ENCODE measurements at regions of chr19 and their contacts with region 1.

Region 1: GRCh38 chr19:10543420-10544241 is at the start of gene ATG4D:
- DNase-seq: peak; percentile 97 to 99 (median 99)
- ATAC-seq: peak; percentile 87
- H3K4me3 ChIP-seq: peak within 1 kb of the TSS; percentile 97
- H3K27ac ChIP-seq: peak within 1 kb of the TSS; percentile 90
- H3K4me1 ChIP-seq: peaks cover 6 to 43% of the 10 kb centered on the region in 2 experiments; a peak in 4 of 5 replicates
- H3K27me3 ChIP-seq: no peaks in the 10 kb centered on the region
- CTCF ChIP-seq: no peak
- EP300 ChIP-seq: peak; percentile 81
- POLR2A ChIP-seq: peak; percentile 84
- RAD21 ChIP-seq: no peak
- polyA plus RNA-seq, gene ATG4D: 0.51 to 1.7 TPM

Region 2: DNA sequence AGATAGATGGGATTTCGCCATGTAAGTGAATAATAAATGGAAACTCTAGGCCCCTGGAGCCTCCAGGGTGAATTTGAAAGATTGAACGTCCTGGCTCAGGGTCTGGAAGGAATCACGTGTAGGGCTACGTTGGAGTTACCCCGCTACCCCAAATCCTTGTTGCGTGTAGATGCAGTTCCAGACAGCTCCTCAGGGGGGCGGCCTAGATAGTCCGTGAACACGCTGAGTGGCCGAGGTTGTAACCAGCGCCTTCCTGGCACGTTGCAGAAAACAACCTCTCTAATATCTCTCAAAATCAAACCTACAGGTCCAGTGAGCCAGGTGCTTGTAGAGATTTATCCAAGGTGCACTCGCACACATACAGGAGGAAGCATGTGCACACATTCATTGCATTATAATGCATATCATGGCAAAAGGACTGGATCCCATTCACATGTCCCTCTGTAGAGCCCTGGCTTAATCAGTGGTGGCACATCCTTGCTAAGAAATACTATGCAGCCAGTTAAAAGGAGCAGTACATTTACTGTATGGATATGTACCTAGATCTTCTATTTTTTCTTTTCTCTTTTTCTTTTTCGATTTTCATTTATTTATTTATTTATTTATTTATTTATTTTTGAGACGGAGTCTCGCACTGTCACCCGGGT is 37.9 kb before region 1 on chr19:
- CTCF ChIA-PET with region 1: no interaction called
- POLR2A ChIA-PET with region 1: interaction called, 3 read pairs
- in situ Hi-C with region 1: no loop called
- intact Hi-C with region 1: loop called (anchors 5 kb)
- DNase-seq: peak; percentile 65 to 86 (median 70)
- ATAC-seq: peak; percentile 29
- H3K4me3 ChIP-seq: no peak overlapping the region
- H3K27ac ChIP-seq: no peak overlapping the region
- H3K4me1 ChIP-seq: peaks cover 3 to 41% of the 10 kb centered on the region in 2 experiments; a peak in 4 of 5 replicates
- H3K27me3 ChIP-seq: no peaks in the 10 kb centered on the region
- CTCF ChIP-seq: peak; percentile 82 to 90 (median 85)
- EP300 ChIP-seq: no peak
- POLR2A ChIP-seq: no peak
- RAD21 ChIP-seq: peak in 1 of 2 experiments; percentile 49; a peak in 2 of 4 replicates

Region 3: GRCh38 chr19:10532457-10532856 is 11.2 kb before region 1 on chr19:
- CTCF ChIA-PET with region 1: no interaction called
- POLR2A ChIA-PET with region 1: interaction called, 10 read pairs
- in situ Hi-C with region 1: no loop called
- intact Hi-C with region 1: no loop called
- DNase-seq: no peak
- ATAC-seq: no peak
- H3K4me3 ChIP-seq: no peak overlapping the region
- H3K27ac ChIP-seq: no peak overlapping the region
- H3K4me1 ChIP-seq: peaks cover 0 to 6% of the 10 kb centered on the region in 2 experiments; a peak in 2 of 5 replicates
- H3K27me3 ChIP-seq: no peaks in the 10 kb centered on the region
- CTCF ChIP-seq: no peak
- EP300 ChIP-seq: no peak
- POLR2A ChIP-seq: no peak
- RAD21 ChIP-seq: no peak

Region 4: DNA sequence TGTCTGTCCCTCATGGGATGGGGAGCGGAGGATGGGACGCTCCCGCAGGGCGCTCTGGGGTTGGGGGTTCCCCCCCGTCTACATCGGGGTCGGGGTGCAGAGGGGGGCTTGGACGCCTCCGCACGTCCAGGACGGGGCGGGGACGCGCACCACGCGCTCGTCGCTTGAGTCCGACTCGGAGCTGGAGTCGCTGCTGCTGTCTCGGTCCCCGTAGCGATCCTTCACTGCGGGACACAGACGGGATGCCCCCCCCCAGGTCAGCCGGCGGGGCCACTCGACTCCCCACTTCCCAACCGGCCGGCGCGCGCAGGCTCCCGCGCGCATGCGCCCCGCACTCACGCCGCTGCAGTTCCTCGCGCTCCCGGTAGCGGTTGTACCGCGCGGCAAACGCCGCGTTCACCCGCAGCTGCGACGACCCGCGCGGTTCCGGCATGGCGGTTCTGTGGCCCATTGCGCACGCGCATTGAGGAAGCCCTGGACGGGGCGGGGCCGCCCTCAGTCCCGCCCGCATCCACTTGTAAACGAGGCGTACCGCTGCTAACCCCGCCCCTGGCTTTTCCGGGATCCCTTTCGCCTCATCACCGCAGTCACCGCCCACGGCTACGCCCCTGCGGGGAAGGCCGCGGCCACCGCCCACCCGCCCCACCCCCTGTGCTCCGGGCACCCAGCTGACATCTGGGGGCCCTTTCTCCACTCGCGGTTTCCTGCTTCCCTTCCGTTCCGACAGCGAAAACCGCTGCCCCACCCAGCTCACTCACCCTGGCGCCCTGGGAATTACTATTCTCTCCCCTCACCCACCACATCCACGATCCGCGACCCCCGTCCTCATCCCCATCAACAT is 22.2 kb after region 1 on chr19 and contains the start of gene KRI1:
- CTCF ChIA-PET with region 1: interaction called, 4 read pairs
- POLR2A ChIA-PET with region 1: interaction called, 3 read pairs
- in situ Hi-C with region 1: no loop called
- intact Hi-C with region 1: loop called (anchors 1 kb)
- DNase-seq: peak; percentile 95 to 99 (median 98)
- ATAC-seq: peak; percentile 78
- H3K4me3 ChIP-seq: peak within 1 kb of the TSS; percentile 83
- H3K27ac ChIP-seq: peak within 1 kb of the TSS; percentile 90
- H3K4me1 ChIP-seq: peaks cover 29 to 49% of the 10 kb centered on the region in 2 experiments
- H3K27me3 ChIP-seq: no peaks in the 10 kb centered on the region
- CTCF ChIP-seq: peak in 2 of 3 experiments; percentile 53 to 63
- EP300 ChIP-seq: no peak
- POLR2A ChIP-seq: peak; percentile 83
- RAD21 ChIP-seq: no peak
- polyA plus RNA-seq, gene KRI1: 1.1 to 2.0 TPM

Region 5: GRCh38 chr19:10580979-10581631 is 37.5 kb after region 1 on chr19:
- CTCF ChIA-PET with region 1: no interaction called
- POLR2A ChIA-PET with region 1: interaction called, 4 read pairs
- in situ Hi-C with region 1: no loop called
- intact Hi-C with region 1: loop called (anchors 5 kb)
- DNase-seq: peak; percentile 78 to 96 (median 82)
- ATAC-seq: peak; percentile 87
- H3K4me3 ChIP-seq: no peak overlapping the region
- H3K27ac ChIP-seq: no peak overlapping the region
- H3K4me1 ChIP-seq: peaks cover 12 to 19% of the 10 kb centered on the region in 2 experiments; a peak in 4 of 5 replicates
- H3K27me3 ChIP-seq: no peaks in the 10 kb centered on the region
- CTCF ChIP-seq: peak; percentile 100
- EP300 ChIP-seq: no peak
- POLR2A ChIP-seq: no peak
- RAD21 ChIP-seq: peak; percentile 99 to 100

Region 6: DNA sequence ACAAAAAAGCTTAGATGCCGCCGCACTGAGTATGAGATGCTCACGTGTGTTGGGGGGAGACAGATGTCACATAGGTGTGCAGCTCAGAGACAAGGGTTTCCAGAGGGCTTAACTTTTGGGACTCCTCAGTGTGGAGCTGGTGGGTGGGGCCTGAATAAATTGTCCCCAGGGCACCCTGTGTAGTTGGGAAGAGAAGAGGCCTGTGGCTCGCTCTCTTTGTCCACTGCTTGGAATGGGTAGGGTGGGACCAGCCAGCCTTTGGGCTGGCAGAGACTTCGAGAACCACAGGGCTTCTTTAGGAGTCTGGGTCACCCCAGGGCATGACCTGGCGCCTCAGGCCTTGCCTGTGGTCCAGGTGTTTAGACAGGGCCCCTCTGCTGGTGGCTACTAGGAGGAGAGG is 79.3 kb after region 1 on chr19:
- CTCF ChIA-PET with region 1: no interaction called
- POLR2A ChIA-PET with region 1: no interaction called
- in situ Hi-C with region 1: no loop called
- intact Hi-C with region 1: no loop called
- DNase-seq: peak in 1 of 4 experiments; percentile 6
- ATAC-seq: no peak; the same call in 2 of the 3 replicates
- H3K4me3 ChIP-seq: no peak overlapping the region
- H3K27ac ChIP-seq: no peak overlapping the region
- H3K4me1 ChIP-seq: peaks cover 7 to 22% of the 10 kb centered on the region in 2 experiments; a peak in 4 of 5 replicates
- H3K27me3 ChIP-seq: no peaks in the 10 kb centered on the region
- CTCF ChIP-seq: no peak
- EP300 ChIP-seq: no peak
- POLR2A ChIP-seq: no peak
- RAD21 ChIP-seq: no peak

Region 7: DNA sequence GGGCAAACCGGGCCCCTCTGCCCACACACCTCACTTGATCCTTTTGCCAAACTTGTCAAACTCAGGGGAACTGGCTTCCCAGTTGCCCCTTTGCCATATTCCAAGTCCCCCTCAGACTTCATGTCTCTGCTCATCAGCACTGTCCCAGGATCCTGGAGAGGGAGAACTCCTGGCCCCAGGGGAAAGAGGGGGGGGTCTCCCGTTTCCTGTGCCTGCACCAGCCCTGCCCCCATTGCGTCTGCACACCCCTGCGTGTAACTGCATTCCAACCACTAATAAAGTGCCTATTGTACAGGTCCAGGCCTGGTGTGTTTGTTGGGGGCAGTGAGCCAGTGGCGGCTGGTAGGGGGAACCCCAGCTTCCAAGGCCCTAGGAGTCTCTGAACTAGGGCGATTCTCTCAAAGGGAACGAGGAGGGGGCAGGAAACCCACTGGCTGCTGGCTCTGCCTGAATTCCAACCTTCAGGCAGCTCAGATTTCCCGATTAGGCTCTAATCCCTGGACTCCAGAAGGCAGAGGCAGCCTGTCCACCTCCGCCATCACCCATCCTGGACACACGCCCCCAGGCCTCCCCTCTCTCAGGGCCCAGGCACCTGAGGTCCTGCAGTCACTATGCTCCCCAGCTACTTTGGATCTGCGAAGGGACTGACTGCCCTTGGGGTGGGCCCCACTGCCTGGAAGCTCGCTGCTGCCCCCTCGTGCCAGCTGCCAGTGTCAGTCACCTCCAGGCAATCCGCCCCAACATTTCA is 100.8 kb after region 1 on chr19:
- CTCF ChIA-PET with region 1: no interaction called
- POLR2A ChIA-PET with region 1: no interaction called
- in situ Hi-C with region 1: no loop called
- intact Hi-C with region 1: loop called (anchors 1 kb)
- DNase-seq: peak; percentile 88 to 92 (median 91)
- ATAC-seq: peak; percentile 96
- H3K4me3 ChIP-seq: no peak overlapping the region
- H3K27ac ChIP-seq: no peak overlapping the region
- H3K4me1 ChIP-seq: peaks cover 8 to 14% of the 10 kb centered on the region in 2 experiments; a peak in 3 of 5 replicates
- H3K27me3 ChIP-seq: no peaks in the 10 kb centered on the region
- CTCF ChIP-seq: peak; percentile 92 to 98 (median 97)
- EP300 ChIP-seq: no peak
- POLR2A ChIP-seq: no peak
- RAD21 ChIP-seq: peak; percentile 96 to 98

Measured in K562 (cell line).